ENCODE measurements at regions of chr1 and their contacts with region 1.

Region 1: GRCh38 chr1:207923561-207923960 is 12.6 kb upstream of the CD34 start:
- DNase-seq: no peak
- ATAC-seq: no peak

Region 2: DNA sequence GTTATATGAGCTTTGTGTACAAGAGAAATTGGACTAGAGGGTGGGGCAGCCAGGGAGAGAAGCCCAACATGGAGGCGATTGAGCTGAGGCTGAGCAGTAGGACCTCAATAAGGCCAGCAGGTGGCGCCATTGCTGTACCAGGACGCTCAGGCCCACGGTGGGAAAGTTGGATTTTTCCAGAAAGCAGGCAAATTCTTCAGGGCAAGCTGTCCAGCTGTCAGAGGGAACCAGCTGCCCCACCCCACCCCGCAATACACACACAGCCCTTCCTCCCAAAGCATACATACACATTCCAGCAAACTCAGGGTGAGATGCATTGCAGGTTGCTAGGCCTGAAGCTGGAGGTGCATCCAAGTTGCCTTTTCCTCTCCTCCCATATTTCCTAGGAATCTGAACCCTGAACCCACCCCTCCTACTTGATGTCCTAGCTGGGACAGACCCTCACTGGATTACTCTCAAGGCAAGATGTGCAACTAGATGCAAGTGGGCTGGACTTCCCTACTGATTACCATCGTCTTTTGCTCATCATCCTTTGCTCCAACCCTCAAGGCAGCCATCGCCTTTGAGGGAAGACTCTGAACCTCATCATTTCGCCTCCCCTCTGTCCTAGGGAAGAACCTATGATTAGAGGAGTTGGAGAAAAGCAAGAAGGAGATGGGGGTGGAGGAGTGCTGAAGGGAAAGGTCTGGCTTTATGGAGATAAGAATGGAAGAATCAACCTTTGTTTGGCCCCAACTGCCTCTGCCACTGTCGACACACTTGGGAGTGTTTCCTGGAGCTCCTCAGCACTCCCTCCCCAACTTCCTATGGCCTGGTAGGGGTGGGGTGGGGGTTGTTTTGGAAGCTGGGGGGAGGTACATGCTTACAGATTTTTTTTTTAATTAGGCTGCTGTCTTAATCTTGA is 38.2 kb before region 1 on chr1:
- intact Hi-C with region 1: loop called (anchors 1 kb)
- DNase-seq: peak; percentile 92
- ATAC-seq: peak; percentile 89

Region 3: DNA sequence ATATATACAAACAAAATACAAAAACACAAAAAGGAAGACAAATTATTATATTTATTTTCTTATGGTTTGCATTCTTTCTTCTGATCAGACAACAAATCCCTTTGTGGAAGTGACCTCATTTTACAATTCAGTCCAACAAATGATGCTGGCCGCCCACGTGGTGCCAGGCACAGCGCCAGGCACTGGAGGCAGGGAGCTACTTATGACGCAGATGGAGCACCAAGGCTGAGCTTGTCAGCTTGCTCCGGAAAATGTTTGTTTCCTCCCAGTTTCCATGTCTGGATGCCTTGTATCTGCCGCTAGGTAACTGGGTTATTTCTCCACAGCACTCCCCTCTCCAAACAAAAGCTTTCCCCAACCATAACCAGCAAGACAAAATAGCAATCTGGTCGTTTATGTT is 18.1 kb after region 1 on chr1:
- intact Hi-C with region 1: loop called (anchors 2 kb)
- DNase-seq: peak; percentile 88
- ATAC-seq: peak; percentile 88

Region 4: DNA sequence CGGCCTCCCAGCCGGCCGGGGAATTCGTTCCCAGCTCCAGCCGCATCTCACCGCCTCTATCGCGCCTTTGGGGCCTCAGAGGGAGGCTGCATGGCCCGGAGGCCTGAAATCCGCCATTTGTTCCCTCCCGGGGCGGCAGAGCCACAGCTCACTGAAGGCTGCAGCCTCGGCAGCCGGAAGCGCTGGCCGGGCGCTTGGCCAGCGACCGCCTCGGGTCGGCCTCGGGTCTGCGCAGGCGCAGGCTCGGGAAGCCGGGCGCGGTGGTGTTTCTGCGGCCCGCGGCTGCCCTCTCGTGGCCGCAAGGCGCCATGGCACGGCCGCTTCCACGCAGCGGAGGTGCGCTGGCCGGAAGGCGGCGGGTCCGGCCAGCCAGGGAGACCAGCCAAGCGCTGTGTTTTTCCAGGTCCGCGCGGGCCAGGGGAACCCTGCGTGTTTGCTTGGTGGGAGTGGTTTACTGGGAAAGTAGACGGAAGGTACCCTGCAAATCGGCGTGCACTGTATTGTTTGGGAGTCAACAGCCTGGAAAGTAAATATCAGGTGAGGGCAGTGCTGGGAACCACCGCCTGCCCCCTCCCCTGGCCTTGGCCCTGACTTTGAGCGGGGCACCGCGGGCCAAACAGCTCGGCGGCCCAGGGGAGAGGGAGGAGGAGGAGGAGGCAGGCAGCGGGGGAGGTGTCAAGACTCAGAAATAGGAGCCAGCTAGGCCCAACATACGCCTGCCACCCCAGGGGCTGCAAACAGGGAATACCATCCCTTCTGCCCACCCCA is 40.0 kb after region 1 on chr1:
- intact Hi-C with region 1: loop called (anchors 1 kb)
- DNase-seq: peak; percentile 97
- ATAC-seq: peak; percentile 75

Measured in Right ventricle myocardium inferior (tissue), 1 donor.